Dorsolateral prefrontal cortex (tissue), 120 donors: ENCODE measurements at regions of chr14 and their contacts with region 1.

Region 1: GRCh38 chr14:58166005-58166983 is 14.3 kb upstream of the ARMH4 start:
- DNase-seq: peak; percentile 77 to 92 (median 84)
- H3K4me3 ChIP-seq: no peak overlapping the region
- H3K27ac ChIP-seq: peak overlapping the region in 8 of 59 donors; percentile 27 to 56 (median 40)
- H3K27me3 ChIP-seq: no peaks in the 10 kb centered on the region
- CTCF ChIP-seq: peak; percentile 63 to 95 (median 87)

Region 2: DNA sequence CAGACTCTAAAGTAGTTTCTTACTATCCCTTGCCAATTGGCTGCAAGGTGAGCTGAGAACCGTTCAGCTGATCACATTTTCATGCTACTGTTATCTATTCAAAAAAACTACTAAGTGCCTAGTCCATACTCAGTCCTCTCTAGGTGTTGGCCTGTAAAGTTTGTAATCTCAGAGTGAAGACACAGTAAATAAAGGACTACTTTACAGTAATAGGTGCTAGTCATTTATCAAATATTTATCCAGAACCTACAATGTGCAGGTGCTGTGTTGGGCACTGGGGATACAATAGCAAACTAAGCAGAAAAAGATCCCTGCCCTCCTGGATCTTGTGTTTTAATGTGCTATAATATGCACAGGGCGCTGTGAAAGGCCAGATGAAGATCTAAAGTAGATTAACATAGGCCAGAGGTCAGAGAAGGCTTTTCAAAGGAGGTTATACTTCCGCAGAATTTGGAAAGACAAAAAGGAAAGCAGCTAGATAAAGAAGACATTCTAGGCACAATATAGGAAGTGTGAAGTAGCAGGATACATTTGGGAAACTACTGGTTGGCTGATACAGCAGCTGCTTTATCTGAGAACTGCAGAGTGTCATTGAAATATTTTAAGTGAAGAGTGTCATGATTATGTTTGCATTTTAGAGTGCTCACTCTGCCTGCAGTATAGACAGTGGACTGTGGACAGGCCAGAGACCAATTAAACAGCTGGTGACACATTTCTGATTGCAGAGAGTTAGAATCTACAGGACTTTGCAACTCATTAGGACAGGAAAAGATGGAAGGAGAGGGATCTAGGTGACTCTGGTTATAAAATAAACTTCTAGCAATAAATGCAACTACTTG is 25.7 kb after region 1 on chr14:
- intact Hi-C with region 1: loop called in 1 of 2 experiments (anchors 1 kb)
- DNase-seq: no peak
- H3K4me3 ChIP-seq: no peak overlapping the region
- H3K27ac ChIP-seq: no peak overlapping the region
- H3K27me3 ChIP-seq: no peaks in the 10 kb centered on the region
- CTCF ChIP-seq: no peak

Region 3: GRCh38 chr14:58313699-58314098 is 147.4 kb after region 1 on chr14:
- intact Hi-C with region 1: no loop called
- DNase-seq: peak in 1 of 10 donors; percentile 28
- H3K4me3 ChIP-seq: no peak overlapping the region
- H3K27ac ChIP-seq: no peak overlapping the region
- H3K27me3 ChIP-seq: no peaks in the 10 kb centered on the region
- CTCF ChIP-seq: no peak